Uterus (tissue), 4 donors: ENCODE measurements at regions of chr6 and their contacts with region 1.

Region 1: GRCh38 chr6:149934249-149935156 is 7.3 kb upstream of the ULBP2 start:
- DNase-seq: peak; percentile 47 to 61
- H3K4me3 ChIP-seq: no peak overlapping the region
- H3K27ac ChIP-seq: no peak overlapping the region
- H3K4me1 ChIP-seq: peaks cover 0 to 11% of the 10 kb centered on the region in 2 donors
- H3K27me3 ChIP-seq: peaks cover 8 to 49% of the 10 kb centered on the region in 2 donors
- CTCF ChIP-seq: peak; percentile 74 to 86 (median 76)
- POLR2A ChIP-seq: no peak

Region 2: GRCh38 chr6:150016324-150017185 is 82.1 kb after region 1 on chr6:
- intact Hi-C with region 1: loop called (anchors 10 kb)
- DNase-seq: peak in 1 of 2 donors; percentile 51
- H3K4me3 ChIP-seq: no peak overlapping the region
- H3K27ac ChIP-seq: no peak overlapping the region
- H3K4me1 ChIP-seq: no peaks in the 10 kb centered on the region
- H3K27me3 ChIP-seq: peaks cover 0 to 34% of the 10 kb centered on the region in 2 donors
- CTCF ChIP-seq: peak; percentile 65 to 80 (median 75)
- POLR2A ChIP-seq: no peak